A673 (cell line): ENCODE measurements at regions of chr1 and their contacts with region 1.

Region 1: GRCh38 chr1:34460193-34460592 is 283.5 kb downstream of the C1orf94 start:
- DNase-seq: peak; percentile 55
- H3K4me3 ChIP-seq: no peak overlapping the region
- H3K27ac ChIP-seq: no peak overlapping the region
- H3K4me1 ChIP-seq: no peaks in the 10 kb centered on the region
- H3K27me3 ChIP-seq: no peaks in the 10 kb centered on the region
- CTCF ChIP-seq: peak; percentile 76

Region 2: DNA sequence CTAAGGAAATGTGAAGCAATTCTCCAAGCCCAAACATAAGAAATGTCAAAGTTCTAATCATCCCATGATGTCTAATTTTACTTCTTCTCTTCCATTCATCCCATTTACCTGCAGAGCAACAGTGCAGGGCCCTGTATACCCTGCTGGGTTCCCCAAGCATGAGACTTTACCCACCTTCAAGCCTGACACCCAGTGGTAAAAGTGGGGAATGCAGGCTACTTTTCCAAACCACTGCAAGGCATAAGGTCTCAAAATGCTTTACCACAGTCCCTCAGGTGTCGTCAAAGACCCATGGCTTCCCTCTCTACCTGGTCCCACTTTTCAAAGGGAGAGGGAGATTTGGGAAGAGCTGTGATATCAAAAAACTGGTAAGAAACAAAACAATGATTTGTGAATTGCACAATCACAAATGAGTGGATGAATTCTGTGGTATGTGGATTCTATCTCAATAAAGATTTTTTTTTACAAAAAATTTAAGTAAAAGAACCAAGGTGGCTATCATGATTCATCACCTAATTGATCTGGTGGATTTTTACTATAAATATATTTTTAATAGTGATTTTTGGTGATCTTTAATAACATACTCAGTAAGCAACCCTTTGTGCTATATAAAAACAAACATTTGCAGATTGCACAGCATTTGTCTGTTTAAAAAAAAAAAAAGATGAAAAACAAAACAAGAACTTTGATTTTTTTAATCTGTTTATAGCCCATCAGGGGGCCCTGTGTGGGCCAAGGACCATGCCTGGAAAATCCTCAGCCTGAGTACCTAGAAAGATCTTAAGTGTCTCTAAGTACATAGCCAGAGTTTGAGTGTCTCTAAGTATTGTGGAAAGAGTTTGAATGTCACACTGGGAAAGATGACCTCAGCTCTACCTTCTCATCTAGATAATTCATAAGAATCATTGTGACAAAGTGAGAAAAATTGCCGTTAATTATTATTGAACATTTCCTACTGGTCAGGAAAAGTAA is 221.6 kb after region 1 on chr1:
- CTCF ChIA-PET with region 1: no interaction called
- POLR2A ChIA-PET with region 1: no interaction called
- intact Hi-C with region 1: loop called (anchors 2 kb)
- DNase-seq: peak; percentile 58
- H3K4me3 ChIP-seq: no peak overlapping the region
- H3K27ac ChIP-seq: no peak overlapping the region
- H3K4me1 ChIP-seq: no peaks in the 10 kb centered on the region
- H3K27me3 ChIP-seq: no peaks in the 10 kb centered on the region
- CTCF ChIP-seq: peak; percentile 82

Region 3: GRCh38 chr1:34742667-34743270 is 282.6 kb after region 1 on chr1:
- CTCF ChIA-PET with region 1: no interaction called
- POLR2A ChIA-PET with region 1: no interaction called
- intact Hi-C with region 1: loop called (anchors 2 kb)
- DNase-seq: peak; percentile 78
- H3K4me3 ChIP-seq: no peak overlapping the region
- H3K27ac ChIP-seq: no peak overlapping the region
- H3K4me1 ChIP-seq: no peaks in the 10 kb centered on the region
- H3K27me3 ChIP-seq: no peaks in the 10 kb centered on the region
- CTCF ChIP-seq: peak; percentile 96